MCF 10A (cell line): ENCODE measurements at regions of chr3 and their contacts with region 1.

Region 1: DNA sequence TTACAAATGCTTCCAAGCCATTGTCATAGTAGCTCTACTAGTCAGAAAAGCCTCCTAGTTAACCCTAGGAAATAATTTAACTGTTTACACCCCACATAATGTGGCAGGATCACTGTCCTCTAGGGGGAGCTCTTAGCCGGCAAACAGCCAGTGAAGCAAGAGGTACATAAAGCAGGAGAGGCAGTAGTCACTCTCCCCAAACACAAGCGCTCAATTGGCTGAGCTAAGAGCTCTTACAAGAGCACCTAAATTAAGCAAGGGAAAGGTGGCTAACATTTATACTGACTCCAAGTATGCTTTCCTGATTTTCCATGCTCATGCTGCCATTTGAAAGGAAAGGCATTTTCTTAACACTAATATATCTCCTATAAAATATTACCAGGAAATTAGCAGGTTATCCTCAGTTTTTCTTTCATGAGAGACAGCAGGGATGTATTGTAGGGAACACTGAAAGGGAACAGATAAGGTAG is 37.6 kb downstream of the NCEH1 start:
- DNase-seq: peak; percentile 92
- H3K4me3 Mint-ChIP-seq: no peak overlapping the region
- H3K27ac Mint-ChIP-seq: peak overlapping the region; percentile 39
- H3K4me1 Mint-ChIP-seq: peaks cover 17% of the 10 kb centered on the region
- H3K27me3 Mint-ChIP-seq: no peaks in the 10 kb centered on the region
- CTCF ChIP-seq: peak; percentile 83

Region 2: DNA sequence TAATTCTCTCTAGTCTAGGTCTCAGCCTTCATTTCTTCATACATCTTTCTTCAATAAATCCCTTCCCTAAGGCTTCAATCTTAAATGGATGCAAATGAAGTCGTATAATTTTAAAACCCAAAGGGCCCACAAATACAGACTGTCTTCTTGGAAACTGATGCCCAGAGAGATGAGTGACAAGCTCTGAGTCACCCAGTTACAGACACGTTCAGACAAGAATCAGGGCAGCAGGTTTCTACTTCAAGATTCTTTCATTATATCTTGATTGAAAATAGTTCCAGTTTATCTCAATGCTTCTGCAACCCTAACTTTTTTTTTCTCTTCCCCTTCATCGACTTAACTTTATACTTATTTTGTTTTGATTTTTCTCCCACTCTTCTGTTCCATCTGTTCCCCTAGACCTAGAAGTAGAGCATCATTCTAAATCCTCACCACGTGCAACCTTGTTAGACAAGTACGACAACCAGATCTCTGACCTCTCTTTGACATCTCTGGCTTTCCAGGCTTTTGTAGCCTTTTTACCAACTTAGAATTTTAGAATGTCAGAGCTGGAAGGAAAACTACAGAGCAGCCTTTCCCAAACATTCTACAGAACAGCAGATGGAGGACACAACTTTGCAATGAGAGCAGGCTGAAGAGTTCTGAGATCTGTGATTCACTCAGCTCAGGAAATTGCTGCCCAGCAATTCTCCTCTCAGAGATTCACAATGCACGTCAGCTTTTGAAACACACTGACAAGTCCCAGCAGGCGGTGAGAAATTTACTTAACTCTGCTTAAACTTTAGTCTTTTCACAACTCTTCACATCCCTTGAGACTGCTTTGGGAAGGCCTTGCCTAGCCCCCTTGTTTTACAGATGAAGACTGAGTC is 12.3 kb after region 1 on chr3:
- CTCF ChIA-PET with region 1: interaction called, 53 read pairs
- POLR2A ChIA-PET with region 1: interaction called, 16 read pairs
- intact Hi-C with region 1: no loop called
- DNase-seq: peak; percentile 85
- H3K4me3 Mint-ChIP-seq: peak overlapping the region; percentile 51
- H3K27ac Mint-ChIP-seq: peak overlapping the region; percentile 74
- H3K4me1 Mint-ChIP-seq: peaks cover 38% of the 10 kb centered on the region
- H3K27me3 Mint-ChIP-seq: no peaks in the 10 kb centered on the region
- CTCF ChIP-seq: no peak

Region 3: GRCh38 chr3:172710664-172711453 is 37.6 kb after region 1 on chr3 and contains the start of gene NCEH1:
- CTCF ChIA-PET with region 1: interaction called, 212 read pairs
- POLR2A ChIA-PET with region 1: interaction called, 43 read pairs
- intact Hi-C with region 1: loop called (anchors 1 kb)
- DNase-seq: peak; percentile 97
- H3K4me3 Mint-ChIP-seq: peak within 1 kb of the TSS; percentile 94
- H3K27ac Mint-ChIP-seq: peak within 1 kb of the TSS; percentile 84
- H3K4me1 Mint-ChIP-seq: peaks cover 8% of the 10 kb centered on the region
- H3K27me3 Mint-ChIP-seq: no peaks in the 10 kb centered on the region
- CTCF ChIP-seq: peak; percentile 74
- total RNA-seq, gene NCEH1: 27.8 and 28.8 TPM in 2 replicates

Region 4: GRCh38 chr3:172750368-172751174 is 77.3 kb after region 1 on chr3 and contains the start of gene ECT2:
- CTCF ChIA-PET with region 1: interaction called, 77 read pairs
- POLR2A ChIA-PET with region 1: interaction called, 57 read pairs
- intact Hi-C with region 1: loop called (anchors 1 kb)
- DNase-seq: peak; percentile 100
- H3K4me3 Mint-ChIP-seq: peak within 1 kb of the TSS; percentile 78
- H3K27ac Mint-ChIP-seq: peak within 1 kb of the TSS; percentile 89
- H3K4me1 Mint-ChIP-seq: peaks cover 49% of the 10 kb centered on the region
- H3K27me3 Mint-ChIP-seq: no peaks in the 10 kb centered on the region
- CTCF ChIP-seq: peak; percentile 59
- total RNA-seq, gene ECT2: 54.8 and 63.9 TPM in 2 replicates

Region 5: GRCh38 chr3:172848910-172849309 is 175.7 kb after region 1 on chr3:
- CTCF ChIA-PET with region 1: no interaction called
- POLR2A ChIA-PET with region 1: no interaction called
- intact Hi-C with region 1: no loop called
- DNase-seq: peak; percentile 48
- H3K4me3 Mint-ChIP-seq: no peak overlapping the region
- H3K27ac Mint-ChIP-seq: no peak overlapping the region
- H3K4me1 Mint-ChIP-seq: no peaks in the 10 kb centered on the region
- H3K27me3 Mint-ChIP-seq: peaks cover 14% of the 10 kb centered on the region
- CTCF ChIP-seq: no peak